Uterus (tissue), 4 donors: ENCODE measurements at regions of chr11 and their contacts with region 1.

Region 1: DNA sequence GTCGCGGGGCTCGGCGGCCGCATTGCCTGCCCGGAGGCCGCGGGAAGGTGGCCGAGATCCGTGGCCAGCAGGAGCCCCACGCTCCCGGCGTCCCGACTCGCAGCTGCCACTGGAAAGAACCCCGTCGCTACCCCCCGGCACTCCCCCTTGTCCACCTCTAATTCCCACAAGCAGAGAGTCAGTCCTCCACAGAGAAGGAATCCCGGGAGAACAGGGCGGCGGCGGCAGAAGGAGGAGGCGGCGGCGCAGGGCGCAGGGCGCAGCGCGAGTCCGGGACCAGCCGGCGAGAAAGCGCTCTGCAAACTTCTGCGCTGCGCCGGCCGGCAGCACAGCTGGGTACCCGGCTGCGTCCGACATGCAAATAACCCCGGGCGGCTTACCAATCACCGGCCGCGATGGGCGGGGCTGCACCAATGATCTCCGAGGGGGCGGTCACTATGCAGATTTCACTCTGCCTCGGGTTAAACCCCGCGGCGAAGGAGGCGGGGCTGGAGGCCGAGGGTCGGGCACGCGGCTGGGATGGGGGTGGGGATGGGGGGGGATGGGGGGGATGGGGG is at the start of gene ABTB2:
- DNase-seq: peak; percentile 99
- H3K4me3 ChIP-seq: peak within 1 kb of the TSS; percentile 59 to 73
- H3K27ac ChIP-seq: peak within 1 kb of the TSS; percentile 85 to 87
- H3K4me1 ChIP-seq: peaks cover 0 to 16% of the 10 kb centered on the region in 2 donors
- H3K27me3 ChIP-seq: no peaks in the 10 kb centered on the region
- CTCF ChIP-seq: peak in 2 of 4 experiments; percentile 7 to 29
- POLR2A ChIP-seq: peak; percentile 98 to 99
- total RNA-seq, gene ABTB2: 2.9 to 8.2 (median 6.6) TPM

Region 2: DNA sequence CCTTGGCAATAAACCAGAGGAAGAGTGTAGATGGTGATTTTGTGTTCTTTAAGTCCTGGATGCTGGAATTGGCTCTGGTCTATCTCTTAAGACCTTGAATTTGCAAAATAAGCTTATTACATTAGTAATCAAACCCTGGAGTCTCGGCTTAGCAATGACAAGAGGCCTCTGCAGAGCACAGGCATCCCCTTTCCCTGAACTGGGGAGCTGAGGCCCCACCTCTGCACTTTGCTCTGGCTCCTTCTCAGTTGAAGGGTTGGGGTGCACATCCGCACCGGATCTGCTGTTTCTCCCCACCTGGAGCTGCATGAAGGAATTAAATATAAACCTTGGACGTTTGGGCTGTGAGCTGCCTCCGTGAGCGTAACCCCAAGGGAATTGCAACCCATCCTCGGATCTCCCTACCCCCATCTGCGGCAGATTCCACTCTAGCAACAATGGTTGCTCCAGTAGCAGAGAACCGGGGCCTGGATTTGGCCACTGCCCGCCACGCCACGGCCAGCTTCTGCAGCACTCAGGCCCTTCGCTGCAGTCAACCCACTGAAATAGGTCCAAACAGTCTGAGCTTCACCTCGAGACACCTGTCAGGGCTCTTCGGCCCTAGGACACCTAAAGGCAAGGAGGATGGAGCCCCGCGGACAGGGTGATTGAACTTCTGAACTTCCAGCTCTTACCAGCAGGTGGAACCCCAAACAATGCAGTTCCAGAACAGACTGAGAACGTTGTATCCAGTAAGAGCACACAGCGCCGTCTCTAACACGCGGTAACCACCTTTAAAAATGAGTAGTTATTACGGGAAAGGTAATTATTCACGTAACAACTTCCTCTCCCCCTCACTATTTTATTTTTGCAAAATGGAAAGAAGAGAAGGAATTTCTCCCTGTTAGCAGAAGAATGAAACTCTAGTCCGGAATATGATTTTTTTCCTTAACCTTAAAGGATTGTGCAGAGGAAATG is 361.0 kb before region 1 on chr11:
- intact Hi-C with region 1: loop called (anchors 5 kb)
- DNase-seq: peak; percentile 62 to 67
- H3K4me3 ChIP-seq: no peak overlapping the region
- H3K27ac ChIP-seq: no peak overlapping the region
- H3K4me1 ChIP-seq: no peaks in the 10 kb centered on the region
- H3K27me3 ChIP-seq: no peaks in the 10 kb centered on the region
- CTCF ChIP-seq: peak; percentile 75 to 82 (median 78)
- POLR2A ChIP-seq: no peak

Region 3: GRCh38 chr11:34174412-34175041 is 183.3 kb before region 1 on chr11:
- intact Hi-C with region 1: loop called (anchors 5 kb)
- DNase-seq: peak; percentile 81 to 85
- H3K4me3 ChIP-seq: no peak overlapping the region
- H3K27ac ChIP-seq: peak overlapping the region; percentile 22 to 45
- H3K4me1 ChIP-seq: no peaks in the 10 kb centered on the region
- H3K27me3 ChIP-seq: no peaks in the 10 kb centered on the region
- CTCF ChIP-seq: peak; percentile 94 to 99 (median 97)
- POLR2A ChIP-seq: peak in 1 of 2 donors; percentile 47